Dendritic cell treated with granulocyte-macrophage colony-stimulating factor and Interleukin-4, amounts not matched to agents 40 ng/mL and 50 ng/mL, for 4 days (primary cell): ENCODE measurements at regions of chr19 and their contacts with region 1.

Region 1: DNA sequence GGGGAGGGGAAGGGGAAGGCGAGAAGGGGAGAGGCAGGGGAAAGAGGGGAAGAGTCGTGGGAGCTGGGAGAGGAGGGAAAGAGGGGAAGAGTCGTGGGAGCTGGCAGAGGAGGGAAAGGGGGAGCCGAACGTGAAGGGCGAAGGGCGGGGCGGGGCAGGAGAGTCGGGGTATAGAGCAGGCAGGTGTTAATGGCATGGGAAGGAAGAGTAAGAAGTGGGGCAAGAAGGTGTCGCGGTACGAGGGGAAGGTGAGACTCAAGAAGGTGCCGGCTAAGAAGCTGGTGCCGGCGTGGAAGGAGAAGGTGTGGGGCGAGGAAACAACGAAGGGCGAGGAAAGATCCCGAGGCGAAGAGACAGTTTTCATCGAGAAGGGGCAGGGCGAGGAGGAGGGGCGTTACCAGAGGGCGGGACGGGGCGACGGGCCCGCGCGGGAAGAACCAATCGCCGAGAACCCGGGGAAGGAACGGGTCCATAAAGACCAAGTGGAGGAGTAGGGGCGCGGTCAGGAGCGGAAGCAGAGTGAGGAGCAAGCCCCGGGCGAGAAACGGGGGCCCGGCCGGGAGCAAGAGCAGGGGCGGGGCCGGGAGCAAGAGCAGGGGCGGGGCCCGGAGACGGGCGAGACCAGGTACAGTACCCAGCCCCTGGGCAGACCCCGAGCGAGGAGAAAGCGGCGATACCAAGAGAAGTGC is 463 bp downstream of the CATSPERG start:
- H3K4me3 Mint-ChIP-seq: peak overlapping the region; percentile 96
- H3K27ac Mint-ChIP-seq: peak overlapping the region; percentile 98
- H3K4me1 Mint-ChIP-seq: peaks cover 25% of the 10 kb centered on the region
- H3K27me3 Mint-ChIP-seq: no peaks in the 10 kb centered on the region

Region 2: DNA sequence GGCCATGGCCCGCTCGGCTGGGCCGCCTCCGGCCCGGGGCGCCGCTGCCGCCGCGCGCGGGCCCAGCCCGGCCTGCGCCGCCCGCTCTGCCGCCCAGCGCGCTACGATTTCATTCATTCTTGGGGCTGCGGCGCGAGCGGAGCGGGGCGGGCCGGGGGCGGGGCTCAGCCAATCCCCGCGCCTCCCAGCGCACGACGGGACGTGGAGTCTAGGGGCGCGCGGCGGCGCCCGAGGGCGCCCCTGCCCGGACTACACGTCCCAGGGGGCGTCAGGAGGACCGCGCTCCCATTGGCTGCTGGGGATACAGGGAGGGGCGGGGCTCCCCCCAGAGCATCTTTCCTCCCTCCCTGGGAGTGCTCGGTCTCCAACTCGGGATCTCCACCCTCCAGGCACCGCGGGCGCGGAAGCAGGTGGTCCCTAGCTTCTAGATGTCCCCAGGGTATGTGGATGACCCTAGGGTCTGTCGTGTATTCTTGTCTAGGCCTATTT is 106.5 kb before region 1 on chr19:
- intact Hi-C with region 1: loop called (anchors 1 kb)
- H3K4me3 Mint-ChIP-seq: no peak overlapping the region
- H3K27ac Mint-ChIP-seq: no peak overlapping the region
- H3K4me1 Mint-ChIP-seq: peaks cover 17% of the 10 kb centered on the region
- H3K27me3 Mint-ChIP-seq: peaks cover 75% of the 10 kb centered on the region

Region 3: GRCh38 chr19:38245826-38246498 is 90.1 kb before region 1 on chr19:
- intact Hi-C with region 1: loop called (anchors 1 kb)
- H3K4me3 Mint-ChIP-seq: peak overlapping the region; percentile 30
- H3K27ac Mint-ChIP-seq: peak overlapping the region; percentile 87
- H3K4me1 Mint-ChIP-seq: peaks cover 48% of the 10 kb centered on the region
- H3K27me3 Mint-ChIP-seq: peaks cover 7% of the 10 kb centered on the region

Region 4: DNA sequence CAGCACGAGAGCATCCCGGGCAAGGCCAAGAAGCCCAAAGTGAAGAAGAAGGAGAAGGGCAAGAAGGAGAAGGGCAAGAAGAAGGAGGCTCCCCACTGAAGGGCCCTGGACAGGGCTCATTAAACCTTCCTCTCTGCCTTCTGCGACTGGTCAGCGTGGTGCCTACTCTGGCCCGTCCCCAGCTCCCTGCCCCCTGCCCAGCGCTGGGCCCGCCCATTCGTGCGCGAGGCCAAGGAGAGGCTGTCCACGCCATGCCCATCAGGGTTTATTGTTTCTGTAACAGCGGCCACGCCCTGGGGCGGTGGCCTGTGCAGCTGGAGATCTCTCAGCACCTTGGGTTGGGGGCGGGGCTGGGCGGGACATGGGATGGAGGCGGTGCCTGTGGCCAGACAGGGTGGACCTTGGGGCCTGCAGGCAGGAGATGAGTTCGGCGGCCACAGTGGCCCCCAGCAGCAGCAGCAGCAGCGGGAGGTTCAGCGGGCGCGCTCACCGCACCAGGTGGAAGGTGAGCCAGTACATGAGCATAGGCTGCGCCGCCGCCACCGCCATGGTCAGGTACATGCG is 31.1 kb before region 1 on chr19:
- intact Hi-C with region 1: no loop called
- H3K4me3 Mint-ChIP-seq: no peak overlapping the region
- H3K27ac Mint-ChIP-seq: no peak overlapping the region
- H3K4me1 Mint-ChIP-seq: peaks cover 64% of the 10 kb centered on the region
- H3K27me3 Mint-ChIP-seq: no peaks in the 10 kb centered on the region

Region 5: GRCh38 chr19:38315657-38316476 is 20.2 kb before region 1 on chr19 and contains the start of gene YIF1B:
- intact Hi-C with region 1: loop called (anchors 2 kb)
- H3K4me3 Mint-ChIP-seq: peak within 1 kb of the TSS; percentile 85
- H3K27ac Mint-ChIP-seq: peak within 1 kb of the TSS; percentile 90
- H3K4me1 Mint-ChIP-seq: peaks cover 76% of the 10 kb centered on the region
- H3K27me3 Mint-ChIP-seq: no peaks in the 10 kb centered on the region

Region 6: DNA sequence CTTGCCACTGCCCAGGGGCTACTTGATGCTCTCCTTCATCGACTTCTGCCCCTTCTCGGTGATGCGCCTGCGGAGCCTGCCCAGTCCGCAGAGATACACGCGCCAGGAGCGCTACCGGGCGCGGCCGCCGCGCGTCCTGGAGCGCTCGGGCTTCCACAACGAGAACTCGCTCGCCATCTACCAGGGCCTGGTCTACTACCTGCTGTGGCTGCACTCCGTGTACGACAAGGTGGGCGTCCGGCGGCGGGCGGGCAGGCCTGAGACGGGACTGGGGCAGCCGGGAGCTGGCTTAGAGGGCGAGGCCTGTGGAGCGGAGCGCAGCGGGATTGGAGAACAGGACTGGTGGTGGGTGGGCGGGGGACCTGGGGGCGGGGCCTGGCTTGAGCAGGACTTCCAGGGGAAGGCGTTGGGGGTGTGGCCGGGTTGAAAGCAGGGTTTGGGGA is 25.6 kb after region 1 on chr19:
- intact Hi-C with region 1: loop called (anchors 1 kb)
- H3K4me3 Mint-ChIP-seq: peak overlapping the region; percentile 91
- H3K27ac Mint-ChIP-seq: peak overlapping the region; percentile 88
- H3K4me1 Mint-ChIP-seq: peaks cover 25% of the 10 kb centered on the region
- H3K27me3 Mint-ChIP-seq: peaks cover 55% of the 10 kb centered on the region

Region 7: DNA sequence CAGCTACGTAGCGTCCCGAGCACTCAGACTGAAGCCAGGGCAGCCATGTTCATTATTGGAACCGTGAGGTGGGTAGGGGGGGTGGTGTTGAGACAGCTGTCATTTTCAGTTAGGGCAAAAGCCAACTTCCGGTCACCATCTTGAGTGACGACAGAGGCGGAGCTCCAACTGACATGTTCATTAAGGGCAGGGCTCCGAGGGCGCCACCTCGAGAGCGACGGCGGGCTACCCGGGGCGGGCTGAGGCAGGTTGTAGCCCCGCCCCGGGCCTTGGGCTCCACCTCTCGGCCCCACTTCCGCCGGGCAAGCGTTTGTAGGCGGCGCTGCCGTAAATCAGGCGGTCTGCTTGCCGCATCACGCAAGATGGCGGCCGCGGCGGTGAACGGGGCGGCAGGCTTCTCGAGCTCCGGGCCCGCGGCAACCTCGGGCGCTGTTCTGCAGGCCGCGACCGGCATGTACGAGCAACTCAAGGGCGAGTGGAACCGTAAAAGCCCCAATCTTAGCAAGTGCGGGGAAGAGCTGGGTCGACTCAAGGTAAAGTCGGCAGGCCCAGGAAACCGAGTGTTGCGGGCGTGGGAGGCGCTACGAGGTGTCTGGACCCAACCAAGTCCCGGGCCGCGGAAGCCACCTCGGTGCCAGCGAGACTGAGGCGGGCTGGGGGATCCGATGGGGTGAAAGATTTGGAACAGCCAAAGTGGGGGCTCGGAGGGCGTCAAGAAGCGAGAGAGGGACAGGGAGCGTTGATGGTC is 38.5 kb after region 1 on chr19 and contains the start of gene PSMD8:
- intact Hi-C with region 1: loop called (anchors 1 kb)
- H3K4me3 Mint-ChIP-seq: peak within 1 kb of the TSS; percentile 92
- H3K27ac Mint-ChIP-seq: peak within 1 kb of the TSS; percentile 95
- H3K4me1 Mint-ChIP-seq: peaks cover 25% of the 10 kb centered on the region
- H3K27me3 Mint-ChIP-seq: peaks cover 11% of the 10 kb centered on the region